Activated CD8-positive, alpha-beta T cell treated with anti-CD3 and anti-CD28 coated beads, Interleukin-2, amount 10 ng/mL, durations not matched to agents 7 days and 5 days (primary cell): ENCODE measurements at regions of chr6 and their contacts with region 1.

Region 1: GRCh38 chr6:109073344-109074132 is 21.1 kb downstream of the SESN1 start:
- DNase-seq: peak; percentile 74
- ATAC-seq: peak; percentile 68
- H3K4me3 Mint-ChIP-seq: no peak overlapping the region
- H3K27ac Mint-ChIP-seq: no peak overlapping the region
- H3K4me1 Mint-ChIP-seq: peaks cover 27% of the 10 kb centered on the region
- H3K27me3 Mint-ChIP-seq: no peaks in the 10 kb centered on the region

Region 2: DNA sequence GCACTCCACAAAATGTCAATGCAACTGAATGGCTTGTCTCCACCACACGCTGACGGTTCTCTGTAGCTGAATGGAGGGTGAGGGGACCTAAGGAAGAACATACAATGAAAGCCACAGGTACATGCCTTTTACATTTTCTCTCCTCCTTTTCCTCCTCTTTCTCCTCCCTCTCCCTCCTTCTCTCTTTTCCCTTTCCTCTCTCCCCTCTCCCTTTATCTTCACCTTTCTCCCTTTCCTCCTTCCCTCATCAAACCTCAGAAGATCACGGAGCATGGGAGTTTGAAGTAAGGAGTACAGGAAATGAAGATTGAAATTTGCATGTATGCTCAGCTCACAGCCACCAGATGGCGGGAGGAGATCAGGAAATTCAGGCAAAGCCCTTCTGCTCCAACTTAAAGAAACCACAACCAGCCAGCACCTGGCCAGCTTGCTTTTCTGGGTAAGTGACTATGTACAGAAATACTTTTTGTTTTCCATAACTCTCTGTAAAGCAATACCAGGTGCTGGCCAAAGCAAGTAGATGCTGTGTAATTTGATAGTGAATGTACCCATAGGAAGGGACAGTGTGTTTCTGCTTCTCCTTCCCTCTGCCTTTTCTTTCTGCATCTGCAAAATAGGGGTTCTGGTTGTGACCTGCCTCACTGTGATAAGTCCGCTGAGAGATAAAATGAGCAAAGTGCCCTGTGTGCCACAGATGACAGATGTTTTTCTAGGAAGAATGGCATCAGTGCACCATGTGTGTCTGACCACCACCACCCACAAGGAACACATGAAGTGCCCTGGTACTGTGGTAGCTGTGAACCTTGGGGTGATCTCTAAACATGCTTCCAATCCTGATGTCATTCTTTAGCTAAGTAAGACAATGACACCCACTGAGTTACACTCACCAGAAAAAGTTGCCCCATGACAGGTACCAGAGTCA is 531.4 kb before region 1 on chr6:
- CTCF ChIA-PET with region 1: interaction called, 99 read pairs
- POLR2A ChIA-PET with region 1: interaction called, 3 read pairs
- DNase-seq: peak; percentile 80
- ATAC-seq: peak; percentile 84
- H3K4me3 Mint-ChIP-seq: peak overlapping the region; percentile 26
- H3K27ac Mint-ChIP-seq: no peak overlapping the region
- H3K4me1 Mint-ChIP-seq: peaks cover 21% of the 10 kb centered on the region
- H3K27me3 Mint-ChIP-seq: peaks cover 4% of the 10 kb centered on the region

Region 3: DNA sequence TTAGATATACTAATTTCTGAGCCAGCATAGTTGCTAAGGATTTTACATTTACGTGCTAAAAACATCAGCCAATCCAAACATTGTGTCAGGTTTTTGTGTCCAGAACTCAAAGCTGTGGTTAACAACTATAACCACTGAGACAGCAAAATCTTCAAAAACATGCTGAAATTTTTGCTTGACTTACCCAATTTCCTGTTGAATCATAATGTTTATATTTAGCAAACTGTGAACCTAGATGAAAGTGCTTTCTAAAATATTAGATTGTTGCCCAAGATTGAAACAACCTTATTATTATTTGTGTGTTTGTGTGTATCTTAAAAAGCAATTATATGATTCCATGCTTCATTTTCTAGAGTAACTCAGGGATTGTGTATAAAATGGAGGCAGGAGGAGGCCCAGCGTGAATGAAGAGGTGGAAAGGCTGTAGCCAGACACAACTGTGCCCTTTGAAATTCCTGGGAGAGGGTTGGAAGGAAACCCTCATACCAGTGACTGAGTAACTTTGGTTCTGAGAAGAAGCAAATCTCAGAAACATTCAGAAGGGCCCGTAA is 177.4 kb before region 1 on chr6:
- CTCF ChIA-PET with region 1: interaction called, 42 read pairs
- POLR2A ChIA-PET with region 1: no interaction called
- DNase-seq: no peak
- ATAC-seq: peak; percentile 73
- H3K4me3 Mint-ChIP-seq: peak overlapping the region; percentile 54
- H3K27ac Mint-ChIP-seq: peak overlapping the region; percentile 86
- H3K4me1 Mint-ChIP-seq: peaks cover 50% of the 10 kb centered on the region
- H3K27me3 Mint-ChIP-seq: no peaks in the 10 kb centered on the region

Region 4: GRCh38 chr6:108921547-108922361 is 151.8 kb before region 1 on chr6:
- CTCF ChIA-PET with region 1: interaction called, 58 read pairs
- POLR2A ChIA-PET with region 1: no interaction called
- DNase-seq: peak; percentile 64
- ATAC-seq: peak; percentile 83
- H3K4me3 Mint-ChIP-seq: peak overlapping the region; percentile 14
- H3K27ac Mint-ChIP-seq: peak overlapping the region; percentile 54
- H3K4me1 Mint-ChIP-seq: peaks cover 54% of the 10 kb centered on the region
- H3K27me3 Mint-ChIP-seq: peaks cover 28% of the 10 kb centered on the region

Region 5: GRCh38 chr6:109015176-109015575 is 58.4 kb before region 1 on chr6:
- CTCF ChIA-PET with region 1: interaction called, 31 read pairs
- POLR2A ChIA-PET with region 1: no interaction called
- DNase-seq: no peak
- ATAC-seq: no peak
- H3K4me3 Mint-ChIP-seq: no peak overlapping the region
- H3K27ac Mint-ChIP-seq: no peak overlapping the region
- H3K4me1 Mint-ChIP-seq: peaks cover 18% of the 10 kb centered on the region
- H3K27me3 Mint-ChIP-seq: no peaks in the 10 kb centered on the region

Region 6: DNA sequence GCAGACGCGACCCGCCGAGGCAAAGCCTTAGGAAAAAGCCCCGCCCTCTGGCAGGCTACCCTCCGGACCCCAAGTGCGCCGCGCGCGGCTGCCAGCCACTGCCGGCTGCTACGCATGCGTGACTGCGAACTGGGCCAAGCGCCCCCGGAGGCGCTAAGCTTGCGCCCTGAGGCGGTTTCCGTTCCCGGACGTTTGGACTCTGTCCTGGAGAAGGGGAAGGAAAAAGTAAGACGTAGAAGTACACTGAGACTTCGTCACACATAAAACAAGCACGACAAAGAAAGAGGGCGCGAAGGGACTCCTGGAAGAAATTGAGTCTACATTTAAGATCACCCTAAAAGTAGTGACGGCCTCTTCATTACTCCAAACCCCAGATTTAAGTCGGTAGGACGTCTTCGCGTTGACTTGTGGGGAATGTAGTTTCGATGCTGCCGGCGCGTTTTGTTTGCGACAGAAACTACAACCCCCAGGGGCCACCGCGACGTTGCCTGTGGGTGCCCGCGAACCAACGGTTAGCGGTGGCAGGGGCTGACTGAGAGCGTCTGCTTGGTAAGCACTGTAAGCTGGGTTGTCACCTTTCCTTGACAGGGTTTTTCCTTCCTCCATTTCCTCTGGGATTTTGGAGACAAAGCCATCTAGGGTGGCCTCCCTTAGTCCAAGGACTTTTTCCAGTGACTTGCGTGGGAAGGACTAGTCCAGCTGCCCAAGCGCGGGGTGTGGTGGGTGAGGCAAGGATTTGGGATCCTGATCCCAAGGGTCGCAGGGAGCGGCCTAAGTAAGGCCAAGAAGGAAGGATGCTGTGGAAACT is 21.7 kb after region 1 on chr6 and contains the start of gene CEP57L1:
- CTCF ChIA-PET with region 1: interaction called, 30 read pairs
- POLR2A ChIA-PET with region 1: interaction called, 11 read pairs
- DNase-seq: peak; percentile 97
- ATAC-seq: peak; percentile 77
- H3K4me3 Mint-ChIP-seq: peak within 1 kb of the TSS; percentile 86
- H3K27ac Mint-ChIP-seq: peak within 1 kb of the TSS; percentile 99
- H3K4me1 Mint-ChIP-seq: peaks cover 50% of the 10 kb centered on the region
- H3K27me3 Mint-ChIP-seq: no peaks in the 10 kb centered on the region
- total RNA-seq, gene CEP57L1: 25.2 to 25.3 TPM